Gastrocnemius medialis (tissue), 4 donors: ENCODE measurements at regions of chr3 and their contacts with region 1.

Region 1: DNA sequence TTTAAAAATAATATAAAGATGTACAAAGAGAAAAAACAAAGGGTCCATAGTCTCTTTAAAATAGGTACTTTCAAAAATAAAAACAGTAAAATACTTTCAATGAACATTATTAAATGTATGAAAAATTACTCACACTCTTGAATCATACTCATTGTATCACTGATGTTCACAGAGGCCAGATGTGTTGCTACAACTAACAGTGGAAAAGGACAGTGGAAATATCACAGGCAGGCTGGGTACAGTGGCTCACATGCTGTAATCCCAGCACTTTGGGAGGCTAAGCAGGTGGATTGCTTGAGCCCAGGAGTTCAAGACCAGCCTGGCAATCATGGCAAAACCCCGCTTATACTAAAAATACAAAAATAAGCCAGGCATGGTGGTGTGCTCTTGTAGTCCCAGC is 26.8 kb downstream of the NPHP3 start:
- DNase-seq: no peak
- ATAC-seq: no peak
- H3K4me3 ChIP-seq: no peak overlapping the region
- H3K27ac ChIP-seq: no peak overlapping the region
- H3K4me1 ChIP-seq: no peaks in the 10 kb centered on the region
- H3K27me3 ChIP-seq: no peaks in the 10 kb centered on the region
- CTCF ChIP-seq: no peak
- POLR2A ChIP-seq: no peak

Region 2: DNA sequence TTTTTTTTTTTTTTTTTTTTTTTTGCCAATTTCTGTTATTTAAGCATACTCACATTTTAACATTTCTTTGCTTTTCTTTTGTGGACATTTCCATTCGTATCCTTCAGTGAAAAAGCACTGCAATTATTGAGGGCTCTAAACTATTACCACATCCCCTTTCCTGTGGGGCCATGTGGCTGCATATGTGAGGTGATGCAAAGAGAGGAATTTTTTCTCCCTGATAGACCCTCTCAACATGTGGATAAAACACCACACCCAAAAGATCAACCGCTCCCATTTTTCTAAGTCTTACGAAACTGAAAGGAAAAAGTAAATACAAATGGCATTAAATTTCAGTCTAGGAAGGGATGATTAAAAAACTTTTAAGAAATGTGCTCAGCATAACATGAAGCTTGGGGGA is 209.3 kb before region 1 on chr3:
- in situ Hi-C with region 1: loop called in 1 of 4 experiments (anchors 25 kb)
- intact Hi-C with region 1: no loop called
- DNase-seq: no peak
- ATAC-seq: no peak
- H3K4me3 ChIP-seq: no peak overlapping the region
- H3K27ac ChIP-seq: no peak overlapping the region
- H3K4me1 ChIP-seq: no peaks in the 10 kb centered on the region
- H3K27me3 ChIP-seq: no peaks in the 10 kb centered on the region
- CTCF ChIP-seq: no peak
- POLR2A ChIP-seq: no peak